Activated CD4-positive, alpha-beta memory T cell treated with anti-CD3 and anti-CD28 coated beads for 36 hours (primary cell): ENCODE measurements at regions of chr10 and their contacts with region 1.

Region 1: GRCh38 chr10:13348216-13349017 is at the start of gene SEPHS1:
- DNase-seq: peak; percentile 91
- H3K4me3 Mint-ChIP-seq: peak within 1 kb of the TSS; percentile 94
- H3K27ac Mint-ChIP-seq: peak within 1 kb of the TSS; percentile 93
- H3K4me1 Mint-ChIP-seq: peaks cover 51% of the 10 kb centered on the region
- H3K27me3 Mint-ChIP-seq: no peaks in the 10 kb centered on the region
- total RNA-seq, gene SEPHS1: 57.2 to 57.6 TPM

Region 2: DNA sequence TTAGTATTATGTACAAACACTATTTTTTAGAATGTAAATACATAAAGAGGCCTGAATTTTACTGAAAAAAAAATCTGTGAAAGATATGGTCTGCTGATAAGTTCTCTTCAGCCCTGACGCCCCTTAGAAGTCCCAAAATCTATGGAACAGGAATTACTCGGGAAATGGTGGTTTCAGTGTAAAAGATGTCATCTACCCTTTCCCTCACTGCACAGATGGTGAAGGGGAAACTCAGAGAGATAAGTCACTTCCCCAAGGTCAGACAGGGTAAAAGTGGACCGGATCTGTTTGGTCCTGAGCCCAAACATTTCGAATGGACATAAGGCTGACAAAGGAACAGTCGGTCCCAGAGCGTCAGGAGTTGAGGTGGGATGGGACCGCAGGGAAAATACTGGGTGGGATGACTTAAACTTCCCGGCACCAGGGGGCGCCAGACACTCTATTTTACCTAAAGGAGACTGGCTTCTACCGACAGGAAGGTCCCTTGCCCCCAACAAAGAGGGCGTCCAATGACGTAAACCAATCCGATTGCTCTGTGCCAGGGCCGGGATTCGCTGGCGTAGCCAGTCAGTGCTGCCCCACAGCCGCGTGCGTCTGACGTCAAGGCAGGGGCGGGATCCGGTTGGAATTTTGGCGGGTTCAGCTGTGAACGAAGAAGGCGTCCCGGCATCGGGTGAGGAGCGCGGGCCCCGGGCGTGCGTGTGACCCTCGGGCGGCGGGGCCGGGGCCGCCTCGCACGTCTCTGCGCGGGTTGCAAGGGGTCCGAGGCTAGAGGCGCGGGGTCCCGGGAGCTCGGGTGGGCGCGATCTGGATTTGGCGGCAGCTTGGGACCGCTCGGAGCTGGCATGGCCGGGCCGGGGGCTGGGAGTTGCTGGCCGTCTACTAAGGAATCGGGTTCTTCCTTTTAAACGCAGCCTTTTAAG is 187.2 kb before region 1 on chr10 and contains the start of gene MCM10:
- CTCF ChIA-PET with region 1: interaction called, 7 read pairs
- POLR2A ChIA-PET with region 1: no interaction called
- intact Hi-C with region 1: loop called (anchors 1 kb)
- DNase-seq: peak; percentile 99
- H3K4me3 Mint-ChIP-seq: peak within 1 kb of the TSS; percentile 85
- H3K27ac Mint-ChIP-seq: peak within 1 kb of the TSS; percentile 34
- H3K4me1 Mint-ChIP-seq: peaks cover 28% of the 10 kb centered on the region
- H3K27me3 Mint-ChIP-seq: no peaks in the 10 kb centered on the region
- total RNA-seq, gene MCM10: 70.6 to 74.2 TPM

Region 3: GRCh38 chr10:13329565-13329964 is 18.9 kb before region 1 on chr10:
- CTCF ChIA-PET with region 1: no interaction called
- POLR2A ChIA-PET with region 1: no interaction called
- intact Hi-C with region 1: no loop called
- DNase-seq: no peak
- H3K4me3 Mint-ChIP-seq: no peak overlapping the region
- H3K27ac Mint-ChIP-seq: no peak overlapping the region
- H3K4me1 Mint-ChIP-seq: no peaks in the 10 kb centered on the region
- H3K27me3 Mint-ChIP-seq: no peaks in the 10 kb centered on the region